A549 (cell line): ENCODE measurements at regions of chr13 and their contacts with region 1.

Region 1: GRCh38 chr13:52128714-52129700 is at the start of gene NEK5:
- DNase-seq: peak; percentile 47 to 70
- ATAC-seq: peak; percentile 93 to 95
- H3K4me3 ChIP-seq: peak within 1 kb of the TSS; percentile 63
- H3K27ac ChIP-seq: peak within 1 kb of the TSS in 1 of 2 experiments; percentile 79; a peak in 3 of 6 replicates
- H3K4me1 ChIP-seq: no peaks in the 10 kb centered on the region
- CTCF ChIP-seq: peak; percentile 65
- EP300 ChIP-seq: no peak
- POLR2A ChIP-seq: no peak
- RAD21 ChIP-seq: peak; percentile 40 to 66; a peak in 4 of 5 replicates
- polyA plus RNA-seq, gene NEK5: 0.17 and 0.23 TPM in 2 replicates

Region 2: GRCh38 chr13:51821606-51822005 is 307.4 kb before region 1 on chr13:
- CTCF ChIA-PET with region 1: interaction called, 11 read pairs
- POLR2A ChIA-PET with region 1: no interaction called
- DNase-seq: no peak
- ATAC-seq: no peak
- H3K4me3 ChIP-seq: no peak overlapping the region
- H3K27ac ChIP-seq: no peak overlapping the region
- H3K4me1 ChIP-seq: peaks cover 5% of the 10 kb centered on the region; the same call in 1 of the 3 replicates
- CTCF ChIP-seq: no peak
- EP300 ChIP-seq: no peak
- POLR2A ChIP-seq: no peak
- RAD21 ChIP-seq: no peak

Region 3: GRCh38 chr13:51935326-51936201 is 193.4 kb before region 1 on chr13:
- CTCF ChIA-PET with region 1: interaction called, 18 read pairs
- POLR2A ChIA-PET with region 1: no interaction called
- DNase-seq: peak; percentile 29 to 35
- ATAC-seq: peak; percentile 77 to 95
- H3K4me3 ChIP-seq: no peak overlapping the region
- H3K27ac ChIP-seq: no peak overlapping the region
- H3K4me1 ChIP-seq: no peaks in the 10 kb centered on the region
- CTCF ChIP-seq: peak; percentile 17; the same call in 1 of the 3 replicates
- EP300 ChIP-seq: no peak
- POLR2A ChIP-seq: no peak
- RAD21 ChIP-seq: peak in 1 of 2 experiments; percentile 31; a peak in 2 of 5 replicates

Region 4: GRCh38 chr13:52104624-52105023 is 24.4 kb before region 1 on chr13:
- CTCF ChIA-PET with region 1: interaction called, 10 read pairs
- POLR2A ChIA-PET with region 1: no interaction called
- DNase-seq: peak in 1 of 2 experiments; percentile 2
- ATAC-seq: no peak
- H3K4me3 ChIP-seq: no peak overlapping the region
- H3K27ac ChIP-seq: peak overlapping the region in 1 of 2 experiments; percentile 53; a peak in 2 of 6 replicates
- H3K4me1 ChIP-seq: no peaks in the 10 kb centered on the region; the same call in 1 of the 3 replicates
- CTCF ChIP-seq: no peak
- EP300 ChIP-seq: no peak
- POLR2A ChIP-seq: no peak
- RAD21 ChIP-seq: no peak

Region 5: GRCh38 chr13:52141297-52141696 is 12.3 kb after region 1 on chr13:
- CTCF ChIA-PET with region 1: interaction called, 19 read pairs
- POLR2A ChIA-PET with region 1: no interaction called
- DNase-seq: no peak
- ATAC-seq: no peak
- H3K4me3 ChIP-seq: no peak overlapping the region
- H3K27ac ChIP-seq: no peak overlapping the region
- H3K4me1 ChIP-seq: no peaks in the 10 kb centered on the region
- CTCF ChIP-seq: no peak
- EP300 ChIP-seq: no peak
- POLR2A ChIP-seq: no peak
- RAD21 ChIP-seq: no peak